ENCODE measurements at regions of chr2 and their contacts with region 1.

Region 1: GRCh38 chr2:25664183-25664964 is 9.0 kb downstream of the DTNB start:
- DNase-seq: peak; percentile 44
- H3K4me3 ChIP-seq: no peak overlapping the region
- H3K27ac ChIP-seq: no peak overlapping the region
- H3K27me3 ChIP-seq: no peaks in the 10 kb centered on the region
- CTCF ChIP-seq: peak; percentile 85

Region 2: DNA sequence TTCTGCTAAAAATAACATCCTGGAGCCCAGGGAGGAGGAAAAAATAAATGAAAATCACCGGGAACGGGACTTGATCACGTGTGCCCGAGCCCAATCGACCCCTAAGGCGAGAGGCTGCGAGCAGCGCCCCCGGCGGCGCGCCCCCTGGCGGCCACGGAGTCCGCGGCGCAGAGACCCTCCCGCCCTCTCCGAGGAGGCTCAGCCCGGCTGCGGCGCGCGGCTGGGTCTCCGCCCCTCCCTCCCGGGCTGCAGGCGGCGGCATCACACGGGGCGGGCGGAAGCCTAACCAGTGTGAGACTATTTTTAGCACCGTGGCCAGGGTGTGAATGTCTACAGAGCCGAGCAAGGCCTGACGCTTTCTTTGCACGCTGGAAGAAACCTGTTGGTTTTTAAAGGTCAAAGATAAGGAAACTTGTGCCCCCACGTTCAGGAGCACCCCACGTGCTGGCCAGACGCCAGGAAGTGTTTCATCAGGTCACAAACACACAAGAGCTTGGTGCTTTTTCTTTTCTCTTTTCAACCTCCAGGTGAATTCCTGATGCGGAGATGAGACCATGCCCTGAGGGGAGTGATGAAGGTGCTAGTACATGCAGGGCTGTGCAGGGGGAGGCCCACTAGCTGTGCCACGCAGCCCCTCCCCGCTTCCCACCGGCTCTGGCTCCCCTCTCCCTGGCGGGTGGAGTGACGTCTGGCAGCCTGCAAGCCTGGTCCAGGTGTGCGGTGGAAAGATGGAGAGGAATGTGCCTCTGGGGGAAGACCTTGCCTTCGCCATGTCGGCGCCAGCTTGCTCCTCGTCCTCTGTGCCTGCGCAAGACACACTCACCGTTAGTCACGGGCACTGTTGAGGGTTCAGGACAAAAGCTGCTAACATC is 287.4 kb before region 1 on chr2:
- CTCF ChIA-PET with region 1: interaction called, 13 read pairs
- POLR2A ChIA-PET with region 1: no interaction called
- DNase-seq: peak; percentile 41
- H3K4me3 ChIP-seq: peak overlapping the region; percentile 45
- H3K27ac ChIP-seq: no peak overlapping the region
- H3K27me3 ChIP-seq: no peaks in the 10 kb centered on the region
- CTCF ChIP-seq: peak; percentile 72

Region 3: DNA sequence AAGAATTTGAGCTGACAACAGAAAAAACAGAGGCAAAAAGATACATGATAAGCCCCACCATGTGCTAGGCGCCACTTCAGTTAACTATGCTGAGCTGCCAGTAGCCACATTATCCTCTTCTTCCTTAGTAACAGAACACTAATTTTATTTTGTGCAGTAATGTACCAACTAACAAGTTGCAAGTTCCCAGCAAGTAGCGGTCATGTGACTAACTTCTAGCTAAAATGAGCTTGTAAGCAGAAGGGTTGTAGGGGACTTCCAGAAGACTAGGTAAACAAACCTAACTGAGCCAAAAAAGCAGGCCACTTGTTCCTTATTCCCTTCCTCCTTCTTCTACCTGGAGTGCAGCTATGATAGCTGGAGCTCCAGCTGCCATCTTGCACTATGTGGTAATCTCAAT is 66.5 kb before region 1 on chr2:
- CTCF ChIA-PET with region 1: interaction called, 13 read pairs
- POLR2A ChIA-PET with region 1: no interaction called
- DNase-seq: no peak
- H3K4me3 ChIP-seq: no peak overlapping the region
- H3K27ac ChIP-seq: no peak overlapping the region
- H3K27me3 ChIP-seq: no peaks in the 10 kb centered on the region
- CTCF ChIP-seq: no peak

Region 4: DNA sequence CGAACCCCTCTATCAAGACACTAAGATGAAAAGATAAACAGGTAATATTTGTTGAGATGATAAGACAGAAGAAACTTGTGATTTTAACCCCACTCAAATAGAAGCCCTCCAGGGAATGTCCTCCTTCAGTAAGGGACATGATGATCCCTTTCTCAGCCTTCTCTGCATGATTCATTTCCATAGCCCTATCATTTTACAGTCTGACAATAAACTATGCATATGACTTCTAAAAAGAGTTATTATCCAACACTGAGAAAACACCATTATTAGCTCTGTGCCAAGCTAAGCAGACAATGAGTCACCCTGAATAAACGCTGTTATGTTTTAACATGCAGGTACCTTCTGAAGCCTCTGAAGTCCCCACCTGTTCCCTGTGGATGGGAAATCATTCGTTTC is 45.7 kb before region 1 on chr2:
- CTCF ChIA-PET with region 1: interaction called, 12 read pairs
- POLR2A ChIA-PET with region 1: no interaction called
- DNase-seq: no peak
- H3K4me3 ChIP-seq: no peak overlapping the region
- H3K27ac ChIP-seq: no peak overlapping the region
- H3K27me3 ChIP-seq: no peaks in the 10 kb centered on the region
- CTCF ChIP-seq: no peak

Region 5: DNA sequence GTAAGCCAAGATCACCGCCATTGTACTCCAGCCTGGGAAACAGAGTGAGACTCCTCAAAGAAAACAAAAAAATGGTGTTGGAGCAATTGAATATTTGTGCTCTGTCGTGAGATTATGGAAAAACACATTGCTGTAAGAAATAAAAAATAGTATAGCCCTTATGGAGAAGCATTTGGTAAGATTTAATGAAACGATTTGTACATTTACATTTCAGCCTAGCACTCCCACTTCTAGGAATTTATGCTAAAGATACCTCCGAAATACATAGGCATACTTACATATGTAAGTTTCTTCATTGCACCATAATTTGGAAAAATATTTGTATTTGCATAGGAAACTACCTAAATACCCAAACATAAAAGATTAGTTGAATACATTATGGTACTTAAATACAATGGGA is 17.7 kb after region 1 on chr2:
- CTCF ChIA-PET with region 1: no interaction called
- POLR2A ChIA-PET with region 1: no interaction called
- DNase-seq: no peak
- H3K4me3 ChIP-seq: no peak overlapping the region
- H3K27ac ChIP-seq: no peak overlapping the region
- H3K27me3 ChIP-seq: peaks cover 8% of the 10 kb centered on the region
- CTCF ChIP-seq: no peak